ENCODE measurements at regions of chr12 and their contacts with region 1.

Region 1: DNA sequence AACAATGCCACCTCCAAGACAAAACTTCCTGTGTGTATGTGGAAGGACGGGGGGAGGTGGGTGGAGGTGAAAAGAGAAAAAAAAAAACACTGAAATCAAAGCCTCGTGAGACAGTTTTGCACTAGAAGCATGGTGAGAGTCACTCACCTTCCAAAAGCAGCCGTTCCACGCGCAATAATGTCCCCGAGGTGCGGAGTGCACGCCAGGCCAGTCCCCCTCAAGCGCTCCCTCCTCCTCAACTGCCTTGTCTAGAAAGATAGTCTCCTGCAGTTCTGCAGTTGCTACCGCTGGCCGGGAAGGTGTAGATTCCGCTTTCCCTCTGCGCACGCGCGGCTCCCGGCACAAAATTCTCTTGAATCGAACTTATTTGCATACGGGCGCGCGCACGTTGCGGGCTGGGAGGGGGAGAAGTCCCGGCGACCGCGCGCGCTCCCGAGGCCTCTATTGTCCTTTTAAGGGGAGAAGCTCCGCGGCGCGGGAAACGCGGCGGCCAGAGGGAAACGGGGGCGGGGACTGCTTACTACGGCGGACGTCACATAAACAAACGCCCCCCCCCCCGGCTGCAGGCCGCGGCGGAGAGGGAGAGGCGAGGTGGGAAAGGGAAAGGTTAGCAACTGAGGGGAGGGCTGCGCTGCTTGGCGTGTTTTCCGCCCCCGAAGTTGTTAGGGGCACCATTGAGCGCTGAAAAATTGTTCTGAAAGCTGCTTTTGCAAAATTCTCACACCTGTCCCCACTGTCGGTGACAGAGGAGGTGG is at the start of gene SINHCAF:
- DNase-seq: peak; percentile 98 to 99
- ATAC-seq: peak; percentile 82 to 87
- H3K4me3 ChIP-seq: peak within 1 kb of the TSS; percentile 70 to 85 (median 80)
- H3K27ac ChIP-seq: peak within 1 kb of the TSS; percentile 76 to 83 (median 82)
- H3K4me1 ChIP-seq: peaks cover 2 to 3% of the 10 kb centered on the region in 2 donors
- H3K27me3 ChIP-seq: peaks cover 0 to 27% (median 13%) of the 10 kb centered on the region in 3 donors
- CTCF ChIP-seq: no peak
- POLR2A ChIP-seq: peak; percentile 61 to 89
- total RNA-seq, gene SINHCAF: 1.5 to 8.6 (median 2.8) TPM

Region 2: GRCh38 chr12:29650371-29650770 is 1675.7 kb before region 1 on chr12:
- in situ Hi-C with region 1: no loop called
- intact Hi-C with region 1: loop called (anchors 5 kb)
- DNase-seq: no peak
- ATAC-seq: no peak
- H3K4me3 ChIP-seq: no peak overlapping the region
- H3K27ac ChIP-seq: no peak overlapping the region
- H3K4me1 ChIP-seq: peaks cover 7 to 9% of the 10 kb centered on the region in 2 donors
- H3K27me3 ChIP-seq: no peaks in the 10 kb centered on the region
- CTCF ChIP-seq: no peak
- POLR2A ChIP-seq: no peak

Region 3: DNA sequence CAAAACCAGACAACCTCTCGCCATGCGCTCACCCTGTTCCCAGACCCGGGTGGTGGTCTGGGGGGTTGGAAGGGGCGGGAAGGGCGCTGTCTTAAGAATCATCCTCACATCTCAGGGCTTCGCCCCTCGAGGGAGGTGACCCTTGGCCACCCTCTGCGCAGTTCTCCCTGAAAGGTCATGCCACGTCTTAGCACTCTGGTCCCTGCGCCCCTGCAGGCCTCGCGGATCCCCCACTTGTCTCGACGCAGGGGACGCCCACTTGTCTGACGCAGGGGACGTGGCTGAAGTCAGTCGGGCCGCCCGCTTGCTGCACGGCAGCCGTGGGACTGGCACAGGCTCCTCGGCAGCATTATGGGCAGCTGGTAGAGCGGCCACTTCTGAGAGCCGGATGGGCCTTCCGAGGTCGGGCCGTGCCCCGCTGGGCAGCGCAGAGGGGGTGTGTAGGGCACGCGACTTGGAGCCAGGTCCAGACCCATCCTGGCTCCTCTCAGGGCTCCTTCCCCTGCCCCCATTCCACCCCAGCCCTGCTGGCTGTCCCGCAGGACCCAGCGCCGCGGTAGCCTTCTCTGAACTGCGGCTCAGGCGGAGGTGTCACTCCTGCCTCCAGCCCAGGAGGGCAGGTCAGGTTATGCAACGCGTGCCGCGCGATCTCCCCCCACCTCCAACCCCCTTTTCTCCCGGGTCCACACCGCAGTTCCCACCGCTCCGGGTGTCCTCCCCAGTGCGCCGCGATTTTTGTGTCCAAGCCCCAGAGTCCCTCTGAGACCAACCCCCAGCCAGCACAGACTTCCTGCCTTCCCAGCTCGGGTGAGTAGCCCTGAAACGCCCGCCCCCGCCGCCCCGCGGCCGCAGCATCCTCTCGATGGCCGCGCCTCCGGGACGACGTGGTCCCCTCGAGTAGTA is 530.4 kb before region 1 on chr12:
- in situ Hi-C with region 1: no loop called
- intact Hi-C with region 1: no loop called
- DNase-seq: peak in 1 of 2 donors; percentile 27
- ATAC-seq: peak; percentile 48 to 57
- H3K4me3 ChIP-seq: peak overlapping the region; percentile 65 to 76 (median 68)
- H3K27ac ChIP-seq: peak overlapping the region in 3 of 4 donors; percentile 5 to 44 (median 40)
- H3K4me1 ChIP-seq: peaks cover 7 to 24% of the 10 kb centered on the region in 2 donors
- H3K27me3 ChIP-seq: no peaks in the 10 kb centered on the region
- CTCF ChIP-seq: peak in 2 of 5 experiments; percentile 9 to 19
- POLR2A ChIP-seq: no peak

Region 4: DNA sequence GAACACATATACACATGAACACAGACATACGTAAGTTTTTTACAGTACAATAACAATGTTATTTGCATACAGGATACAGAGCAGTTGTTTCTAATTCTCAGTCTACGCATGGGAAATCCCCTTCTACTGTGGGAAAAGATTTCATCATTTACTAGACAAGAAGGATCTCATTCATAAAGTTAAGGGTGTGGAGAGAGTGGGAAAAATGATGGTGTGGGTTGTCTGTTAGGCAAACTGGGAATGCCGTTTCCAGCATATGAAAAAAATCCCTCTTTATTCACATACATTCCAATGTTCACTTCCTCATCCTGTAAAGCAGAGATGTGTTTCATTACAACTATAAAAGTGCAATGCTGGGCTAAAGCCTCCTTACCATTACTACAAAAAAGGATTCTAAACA is 121.0 kb before region 1 on chr12:
- in situ Hi-C with region 1: loop called in 1 of 4 experiments (anchors 25 kb)
- intact Hi-C with region 1: no loop called
- DNase-seq: no peak
- ATAC-seq: no peak
- H3K4me3 ChIP-seq: no peak overlapping the region
- H3K27ac ChIP-seq: no peak overlapping the region
- H3K4me1 ChIP-seq: peaks cover 0 to 4% of the 10 kb centered on the region in 2 donors
- H3K27me3 ChIP-seq: no peaks in the 10 kb centered on the region
- CTCF ChIP-seq: no peak
- POLR2A ChIP-seq: no peak

Region 5: GRCh38 chr12:31353750-31354708 is 28.0 kb after region 1 on chr12:
- in situ Hi-C with region 1: no loop called
- intact Hi-C with region 1: no loop called
- DNase-seq: no peak
- ATAC-seq: peak in 1 of 2 donors; percentile 21
- H3K4me3 ChIP-seq: no peak overlapping the region
- H3K27ac ChIP-seq: no peak overlapping the region
- H3K4me1 ChIP-seq: no peaks in the 10 kb centered on the region
- H3K27me3 ChIP-seq: no peaks in the 10 kb centered on the region
- CTCF ChIP-seq: no peak
- POLR2A ChIP-seq: no peak

Region 6: DNA sequence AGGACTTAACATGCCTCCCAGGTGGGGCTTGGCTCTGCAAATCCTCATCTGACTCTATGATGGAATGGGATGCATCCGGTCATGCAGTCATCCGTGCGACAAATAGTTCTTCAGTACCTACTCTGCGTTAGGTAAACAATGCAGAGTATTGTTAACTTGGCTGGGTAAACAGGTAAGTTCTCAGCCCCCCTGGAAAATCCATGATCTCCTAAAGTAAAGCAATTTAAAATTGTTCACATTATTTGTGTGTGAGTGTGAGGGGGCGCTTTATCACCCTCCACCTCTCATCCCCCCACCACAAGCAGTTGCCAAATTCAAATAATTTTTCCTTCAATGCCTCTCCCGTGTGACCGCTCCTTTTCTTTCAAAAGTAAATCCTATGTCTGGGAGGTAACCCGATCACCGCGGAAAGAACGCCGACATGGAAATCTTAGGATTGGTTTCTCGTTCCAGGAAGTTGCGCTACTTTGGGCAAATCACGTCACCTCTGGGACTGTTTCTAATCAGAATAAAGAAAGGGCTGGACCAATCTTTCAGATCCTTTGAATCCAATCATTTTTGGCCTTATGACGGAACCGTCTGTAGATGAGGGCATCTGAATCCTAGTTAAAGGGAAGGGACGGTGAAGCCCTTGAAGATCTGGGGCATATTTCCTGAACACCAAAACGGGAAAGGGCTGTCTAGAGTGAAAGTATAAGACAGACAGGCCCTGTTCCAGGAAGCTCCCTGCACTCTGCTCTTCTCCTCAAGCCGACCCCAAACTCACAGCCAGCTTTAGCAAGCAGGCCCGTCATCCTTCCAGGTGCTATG is 43.9 kb after region 1 on chr12:
- in situ Hi-C with region 1: no loop called
- intact Hi-C with region 1: loop called (anchors 1 kb)
- DNase-seq: peak; percentile 5 to 29
- ATAC-seq: peak; percentile 47 to 77
- H3K4me3 ChIP-seq: peak overlapping the region; percentile 29 to 51 (median 48)
- H3K27ac ChIP-seq: peak overlapping the region in 3 of 4 donors; percentile 1 to 16 (median 15)
- H3K4me1 ChIP-seq: peaks cover 6 to 9% of the 10 kb centered on the region in 2 donors
- H3K27me3 ChIP-seq: no peaks in the 10 kb centered on the region
- CTCF ChIP-seq: no peak
- POLR2A ChIP-seq: no peak

Region 7: GRCh38 chr12:31589904-31590641 is 264.0 kb after region 1 on chr12:
- in situ Hi-C with region 1: no loop called
- intact Hi-C with region 1: loop called (anchors 5 kb)
- DNase-seq: peak; percentile 53 to 69
- ATAC-seq: peak; percentile 65
- H3K4me3 ChIP-seq: peak overlapping the region; percentile 73 to 94 (median 86)
- H3K27ac ChIP-seq: peak overlapping the region; percentile 90 to 98 (median 94)
- H3K4me1 ChIP-seq: peaks cover 23 to 34% of the 10 kb centered on the region in 2 donors
- H3K27me3 ChIP-seq: no peaks in the 10 kb centered on the region
- CTCF ChIP-seq: no peak
- POLR2A ChIP-seq: peak; percentile 43 to 61

Region 8: DNA sequence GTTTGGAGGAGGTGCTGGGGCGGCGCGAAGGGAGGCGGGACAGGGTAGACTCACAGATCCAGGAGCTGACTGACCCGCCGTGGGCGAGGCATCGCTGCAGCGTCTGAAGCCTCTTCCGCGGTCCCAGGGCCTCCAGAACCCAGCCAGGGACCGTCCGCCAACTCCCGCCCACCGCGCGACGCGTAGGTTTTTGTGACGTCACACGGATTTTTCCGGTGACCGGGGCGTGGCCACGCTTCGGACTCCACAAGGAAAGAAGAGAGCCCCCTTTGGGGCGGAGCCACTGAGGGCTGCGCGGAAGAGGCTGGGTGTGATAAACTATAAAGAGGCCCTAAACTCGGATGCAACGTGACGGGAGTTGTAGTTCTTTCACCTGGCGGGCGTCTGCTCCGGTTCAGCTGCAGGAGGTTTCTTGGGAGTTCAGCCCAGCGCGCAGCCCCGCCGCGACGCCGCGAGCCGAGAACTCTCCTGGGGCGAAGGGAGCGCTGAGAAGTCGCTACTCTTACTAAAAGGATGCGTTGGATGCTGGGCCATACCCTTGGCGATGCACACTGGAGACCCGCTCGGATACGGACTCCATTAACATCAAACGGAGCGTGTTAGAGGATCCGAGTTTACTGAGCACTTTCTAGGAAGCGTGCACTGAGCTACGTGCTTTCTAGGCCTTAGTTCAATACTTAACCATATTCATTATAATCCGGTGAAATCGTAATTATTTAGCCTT is 403.0 kb after region 1 on chr12 and contains the start of gene AMN1:
- in situ Hi-C with region 1: no loop called
- intact Hi-C with region 1: loop called (anchors 1 kb)
- DNase-seq: peak; percentile 94 to 99
- ATAC-seq: peak; percentile 88 to 91
- H3K4me3 ChIP-seq: peak within 1 kb of the TSS; percentile 72 to 89 (median 79)
- H3K27ac ChIP-seq: peak within 1 kb of the TSS; percentile 91 to 97 (median 94)
- H3K4me1 ChIP-seq: peaks cover 50 to 54% of the 10 kb centered on the region in 2 donors
- H3K27me3 ChIP-seq: no peaks in the 10 kb centered on the region
- CTCF ChIP-seq: peak in 1 of 5 experiments; percentile 32
- POLR2A ChIP-seq: peak; percentile 75 to 92
- total RNA-seq, gene AMN1: 14.9 to 27.2 (median 18.6) TPM

Region 9: GRCh38 chr12:31959161-31959700 is 633.2 kb after region 1 on chr12 and contains the start of gene RESF1:
- in situ Hi-C with region 1: no loop called
- intact Hi-C with region 1: loop called (anchors 10 kb)
- DNase-seq: peak; percentile 68 to 75
- ATAC-seq: peak; percentile 93 to 96
- H3K4me3 ChIP-seq: peak within 1 kb of the TSS; percentile 62 to 76 (median 68)
- H3K27ac ChIP-seq: peak within 1 kb of the TSS; percentile 81 to 91 (median 84)
- H3K4me1 ChIP-seq: peaks cover 21 to 34% of the 10 kb centered on the region in 2 donors
- H3K27me3 ChIP-seq: no peaks in the 10 kb centered on the region
- CTCF ChIP-seq: peak in 1 of 5 experiments; percentile 19
- POLR2A ChIP-seq: peak; percentile 66 to 69
- total RNA-seq, gene RESF1: 16.0 to 31.7 (median 17.7) TPM